GM18951 (cell line): ENCODE measurements at regions of chr6 and their contacts with region 1.

Region 1: DNA sequence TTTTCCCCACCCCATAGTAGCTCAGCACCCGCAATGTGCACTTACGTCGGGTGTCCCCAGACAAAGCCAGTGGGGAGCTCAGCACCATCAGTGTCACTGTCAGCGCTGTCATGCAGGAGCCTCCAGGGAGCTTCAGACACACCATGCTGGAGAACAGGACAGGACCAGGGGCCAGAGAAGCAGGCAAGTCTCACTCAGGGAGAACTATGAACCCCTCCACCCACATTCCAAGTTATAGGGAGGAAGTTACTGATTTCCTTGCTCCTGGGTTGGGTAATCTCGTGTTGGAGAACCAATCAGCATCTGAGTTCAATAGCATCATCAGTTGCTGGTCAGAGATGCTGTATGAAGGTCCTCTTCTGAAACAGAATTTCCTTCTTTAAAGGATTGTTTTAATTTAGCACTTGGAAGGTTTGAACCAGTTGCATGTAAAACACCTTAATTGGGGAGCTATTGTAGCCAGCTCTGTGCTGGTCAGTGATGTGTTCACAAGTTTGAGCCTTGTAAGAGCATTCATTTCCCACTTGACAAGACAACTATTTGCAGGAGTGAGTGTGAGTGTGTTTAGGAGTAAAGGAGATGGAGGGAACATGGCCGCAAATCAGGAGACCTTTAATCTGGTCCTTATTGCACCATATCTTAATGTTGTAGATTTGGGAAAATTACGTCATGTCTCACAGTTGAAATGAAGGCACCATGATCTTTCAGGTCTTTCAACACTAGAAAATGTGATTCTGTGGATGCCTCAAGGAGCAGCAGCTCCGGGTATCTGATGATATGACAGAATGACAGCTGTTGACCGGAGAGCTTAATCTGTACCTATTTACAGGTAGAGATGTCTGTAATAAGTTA is at the start of gene HLA-DRB1:
- POLR2A ChIP-seq: no peak

Region 2: DNA sequence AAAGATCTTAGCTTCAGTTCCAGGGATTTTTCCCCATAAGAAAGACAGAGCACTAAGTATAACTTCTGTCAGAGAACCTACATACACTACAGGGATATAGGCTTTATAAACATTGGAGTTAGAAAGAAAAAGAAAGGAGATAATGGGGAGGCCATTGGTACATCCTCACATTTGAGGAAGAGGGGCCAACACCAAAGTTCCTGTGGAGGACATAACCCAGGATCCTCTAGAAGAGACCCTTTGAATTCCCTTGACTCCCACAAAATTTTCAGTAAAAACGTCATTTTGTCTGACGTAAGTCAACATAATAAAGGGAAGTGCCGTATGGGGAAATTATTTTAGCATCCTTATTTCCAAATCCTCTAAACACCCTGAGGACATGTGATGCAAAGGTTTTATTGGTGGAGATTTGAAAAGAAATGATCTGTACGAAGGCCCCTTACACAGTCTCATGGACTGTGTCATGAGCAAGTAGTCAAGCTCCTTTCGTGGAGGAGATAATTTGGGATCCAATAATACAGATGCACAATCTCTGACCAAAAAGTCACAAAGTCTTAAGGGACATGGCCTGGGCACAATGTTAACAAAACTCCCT is 116.9 kb before region 1 on chr6:
- in situ Hi-C with region 1: loop called (anchors 5 kb)
- POLR2A ChIP-seq: no peak

Region 3: DNA sequence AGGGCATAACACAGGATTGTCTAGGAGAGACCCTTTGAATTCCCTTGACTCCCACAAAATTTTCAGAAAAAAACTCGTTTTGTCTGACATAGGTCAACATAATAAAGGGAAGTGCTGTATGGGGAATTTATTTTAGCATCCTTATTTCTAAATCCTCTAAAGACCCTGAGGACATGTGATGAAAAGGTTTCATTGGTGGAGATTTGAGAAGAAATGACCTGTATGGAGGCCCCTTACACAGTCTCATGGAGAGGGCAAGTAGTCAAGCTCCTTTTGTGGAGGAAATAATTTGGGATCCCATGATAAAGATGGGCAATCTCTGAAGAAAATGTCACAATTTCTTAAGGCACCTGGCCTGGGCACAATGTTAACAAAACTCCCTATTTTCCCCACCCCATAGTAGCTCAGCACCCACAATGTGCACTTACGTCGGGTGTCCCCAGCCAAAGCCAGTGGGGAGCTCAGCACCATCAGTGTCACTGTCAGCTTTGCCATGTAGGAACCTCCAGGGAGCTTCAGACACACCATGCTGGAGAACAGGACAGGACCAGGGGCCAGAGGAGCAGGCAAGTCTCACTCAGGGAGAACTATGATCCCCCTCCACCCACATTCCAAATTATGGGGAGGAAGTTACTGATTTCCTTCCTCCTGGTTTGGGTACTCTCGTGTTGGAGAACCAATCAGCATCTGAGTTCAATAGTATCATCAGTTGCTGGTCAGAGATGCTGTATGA is 60.0 kb before region 1 on chr6 and contains the start of gene HLA-DRB5:
- in situ Hi-C with region 1: loop called (anchors 5 kb)
- POLR2A ChIP-seq: peak; percentile 54